ENCODE measurements at regions of chr11 and their contacts with region 1.

Region 1: GRCh38 chr11:57249384-57250319 is 12.6 kb upstream of the APLNR start:
- DNase-seq: peak; percentile 52 to 75
- H3K4me3 ChIP-seq: no peak overlapping the region
- H3K4me1 ChIP-seq: no peaks in the 10 kb centered on the region
- H3K27me3 ChIP-seq: peaks cover 17% of the 10 kb centered on the region; the same call in 1 of the 2 replicates

Region 2: DNA sequence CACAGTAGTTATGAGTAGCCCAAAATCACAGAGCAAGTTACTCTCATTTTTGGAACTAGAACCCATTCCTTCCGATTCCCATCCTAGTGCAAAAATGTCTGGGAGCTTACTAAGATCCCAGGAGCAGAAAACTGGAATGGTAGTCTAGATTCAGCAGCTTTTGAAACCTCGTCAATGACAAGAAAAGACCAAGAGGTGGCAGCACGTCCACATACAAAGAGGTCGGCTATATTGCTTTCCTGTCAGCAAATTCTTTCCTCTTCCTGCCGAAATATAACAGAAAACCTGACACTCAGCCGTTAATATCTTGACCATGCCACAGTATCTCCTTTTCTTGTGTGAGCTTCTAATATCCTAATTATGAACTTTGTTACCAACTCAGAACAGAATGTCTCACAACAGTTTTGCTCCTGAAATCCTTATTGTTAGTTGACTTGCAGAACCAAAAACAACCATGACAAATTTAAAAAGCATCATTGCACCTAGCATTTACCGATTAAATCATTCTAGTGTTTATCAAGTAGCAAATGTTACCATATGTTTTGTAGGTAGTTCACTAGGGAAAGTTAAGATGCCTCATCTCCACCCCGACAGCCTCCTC is 408.3 kb before region 1 on chr11:
- in situ Hi-C with region 1: loop called (anchors 10 kb)
- DNase-seq: peak; percentile 52 to 63
- H3K4me3 ChIP-seq: no peak overlapping the region
- H3K4me1 ChIP-seq: no peaks in the 10 kb centered on the region
- H3K27me3 ChIP-seq: no peaks in the 10 kb centered on the region

Region 3: DNA sequence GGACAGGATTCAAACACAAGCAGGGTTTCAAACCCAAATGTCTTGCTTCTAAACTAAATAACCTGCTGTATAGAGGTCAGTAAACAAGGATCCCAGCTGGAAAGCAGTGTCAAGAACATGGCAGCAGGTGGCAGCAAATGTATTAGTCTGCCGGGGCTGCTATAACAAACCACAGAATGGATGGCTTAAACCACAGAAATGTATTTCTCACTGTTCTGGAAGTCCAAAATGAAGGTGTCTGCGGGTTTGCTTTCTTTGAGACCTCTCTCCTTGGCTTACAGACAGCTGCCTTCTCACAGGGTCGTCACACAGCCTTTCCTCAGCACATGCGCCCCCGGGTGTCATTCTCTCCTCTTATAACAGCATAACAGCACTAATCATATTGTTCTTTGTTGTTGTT is 133.0 kb before region 1 on chr11:
- in situ Hi-C with region 1: loop called (anchors 10 kb)
- DNase-seq: peak; percentile 31 to 55
- H3K4me3 ChIP-seq: no peak overlapping the region
- H3K4me1 ChIP-seq: no peaks in the 10 kb centered on the region
- H3K27me3 ChIP-seq: peaks cover 4% of the 10 kb centered on the region; the same call in 1 of the 2 replicates

Measured in HAP-1 (cell line).